Dorsolateral prefrontal cortex (tissue), 120 donors: ENCODE measurements at regions of chr4 and their contacts with region 1.

Region 1: GRCh38 chr4:38179690-38180377 is 219.6 kb downstream of the PTTG2 start:
- DNase-seq: peak; percentile 60 to 84 (median 78)
- H3K4me3 ChIP-seq: no peak overlapping the region
- H3K27ac ChIP-seq: peak overlapping the region in 18 of 59 donors; percentile 8 to 73 (median 42)
- H3K27me3 ChIP-seq: no peaks in the 10 kb centered on the region
- CTCF ChIP-seq: peak; percentile 89 to 100 (median 96)

Region 2: DNA sequence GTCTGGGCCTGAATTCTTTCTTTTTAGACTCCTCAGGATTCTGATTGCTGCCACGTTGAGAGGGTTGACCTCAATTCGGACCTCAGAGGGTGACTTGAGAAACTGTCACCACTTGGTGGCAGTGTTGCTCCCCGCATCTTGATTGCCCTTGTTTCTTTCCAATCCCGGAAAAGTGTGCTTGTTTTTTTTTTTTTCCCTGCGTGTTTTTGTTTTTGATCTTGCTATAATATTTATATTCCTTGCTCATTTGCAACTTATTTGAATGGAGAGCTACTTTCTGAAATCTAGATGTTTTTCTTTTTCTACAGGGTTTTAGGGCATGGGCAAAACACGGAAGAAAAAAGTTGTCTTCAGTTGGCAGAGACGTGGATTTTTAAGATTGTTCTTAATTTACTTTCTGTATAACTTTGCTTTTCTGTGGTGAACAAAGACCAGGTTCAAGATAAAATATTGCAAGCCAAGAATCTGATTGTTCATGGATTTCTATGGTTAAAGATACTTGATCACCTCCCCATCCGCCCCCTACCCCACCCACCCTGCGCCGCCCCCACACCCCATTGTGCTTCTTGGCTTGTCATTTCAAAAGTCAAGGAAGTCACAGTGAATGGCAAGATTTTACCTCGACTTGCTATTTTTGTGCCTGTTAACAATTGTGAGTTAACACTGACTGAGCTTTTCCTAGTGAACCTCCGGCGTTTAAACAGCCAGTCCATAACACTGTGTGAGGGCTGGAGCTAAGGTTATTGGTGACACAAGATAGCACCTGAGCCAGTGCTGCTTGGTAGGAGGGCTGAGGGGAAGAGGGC is 117.5 kb before region 1 on chr4:
- intact Hi-C with region 1: loop called in 1 of 2 experiments (anchors 5 kb)
- DNase-seq: peak; percentile 59 to 85 (median 74)
- H3K4me3 ChIP-seq: peak overlapping the region in 56 of 59 donors; percentile 11 to 65 (median 43)
- H3K27ac ChIP-seq: peak overlapping the region in 20 of 59 donors; percentile 1 to 67 (median 40)
- H3K27me3 ChIP-seq: no peaks in the 10 kb centered on the region
- CTCF ChIP-seq: peak; percentile 80 to 97 (median 91)

Region 3: DNA sequence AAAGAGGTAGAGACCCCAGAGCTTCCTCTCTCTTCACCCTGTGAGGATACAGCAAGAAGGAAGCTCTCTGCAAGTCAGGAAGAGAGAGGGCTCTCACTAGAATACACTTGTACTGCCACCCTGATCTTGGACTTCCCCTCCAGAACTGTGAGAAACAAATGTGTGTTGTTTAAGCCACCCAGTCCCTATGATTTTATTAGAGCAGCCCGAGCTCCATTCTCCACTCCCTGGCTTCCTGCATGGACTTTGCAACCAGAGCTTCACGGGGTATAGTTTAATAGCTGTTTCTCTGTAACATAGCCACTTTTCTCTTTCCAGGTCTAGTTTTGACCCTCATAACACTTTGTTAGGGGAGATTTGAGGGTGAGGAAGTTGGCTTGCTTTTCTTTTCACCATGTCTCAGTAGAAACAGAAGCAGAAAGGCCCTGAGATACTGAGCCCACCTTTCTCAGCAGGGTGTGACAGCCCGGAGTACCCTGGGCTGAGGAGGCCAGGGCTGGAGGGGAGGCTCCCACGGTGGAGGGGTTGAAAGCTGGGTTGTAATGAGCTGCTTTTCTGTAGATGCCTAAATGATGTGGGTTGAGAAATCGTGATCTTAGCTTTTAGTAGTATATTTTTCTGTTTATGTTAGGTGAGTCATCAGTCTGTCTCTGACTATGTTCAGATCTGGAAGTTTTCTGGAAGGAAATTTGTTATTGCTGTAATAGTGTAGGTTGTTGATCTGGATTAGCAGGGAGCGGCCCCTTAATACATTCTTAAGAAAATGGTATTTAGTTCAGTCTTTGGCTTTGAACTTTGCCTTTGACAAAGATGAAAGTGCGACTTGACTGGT is 101.0 kb before region 1 on chr4:
- intact Hi-C with region 1: loop called in 1 of 2 experiments (anchors 10 kb)
- DNase-seq: no peak
- H3K4me3 ChIP-seq: no peak overlapping the region
- H3K27ac ChIP-seq: peak overlapping the region in 47 of 59 donors; percentile 4 to 80 (median 49)
- H3K27me3 ChIP-seq: no peaks in the 10 kb centered on the region
- CTCF ChIP-seq: no peak

Region 4: GRCh38 chr4:38562751-38563198 is 382.9 kb after region 1 on chr4:
- intact Hi-C with region 1: loop called in 1 of 2 experiments (anchors 10 kb)
- DNase-seq: no peak
- H3K4me3 ChIP-seq: no peak overlapping the region
- H3K27ac ChIP-seq: peak overlapping the region in 14 of 59 donors; percentile 3 to 89 (median 24)
- H3K27me3 ChIP-seq: no peaks in the 10 kb centered on the region
- CTCF ChIP-seq: no peak

Region 5: DNA sequence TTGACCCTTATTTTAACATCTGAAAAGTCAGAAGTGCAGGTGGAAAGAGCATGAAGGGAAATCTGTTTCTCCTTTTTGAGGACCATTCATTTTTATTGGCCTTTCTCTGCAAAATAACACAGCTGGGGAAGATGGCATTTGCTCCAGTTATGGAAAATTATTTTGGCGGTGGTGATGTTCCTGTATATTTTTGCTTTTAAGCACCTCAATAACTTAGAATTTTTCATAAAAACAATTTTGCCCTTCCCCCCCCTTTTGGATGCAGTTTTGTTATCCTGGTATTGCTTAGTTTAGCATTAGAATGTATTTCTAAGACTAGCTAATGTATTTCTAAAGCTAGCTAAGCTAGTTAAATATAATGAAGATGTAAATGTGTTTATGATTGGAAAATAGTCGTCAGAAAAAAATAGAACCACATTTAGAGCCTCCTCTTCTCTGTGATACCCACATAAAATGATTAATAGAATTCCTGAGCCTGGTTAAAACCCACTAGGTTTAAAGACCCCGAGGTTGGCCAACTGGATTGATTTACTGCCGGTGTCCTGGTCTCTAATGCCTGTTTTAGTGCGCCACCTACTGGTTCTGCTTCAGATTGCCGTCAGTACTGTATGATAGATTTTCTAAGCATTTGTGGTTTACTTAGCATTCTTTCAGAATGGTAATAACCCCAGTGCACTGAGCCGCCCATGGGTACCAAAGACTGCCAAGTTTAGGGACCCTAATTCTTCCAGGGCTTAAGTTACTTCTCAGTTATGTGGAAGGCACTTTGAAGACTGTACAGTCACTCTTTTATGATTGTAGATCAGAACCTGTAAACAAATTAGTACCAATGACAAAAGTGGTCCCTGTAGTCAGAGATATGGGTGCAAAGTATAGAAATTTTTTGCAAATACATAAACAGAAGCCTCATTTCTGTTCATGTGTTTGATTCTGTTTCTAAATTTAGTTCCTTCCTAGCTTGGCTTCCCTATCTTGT is 495.6 kb after region 1 on chr4:
- intact Hi-C with region 1: loop called (anchors 2 to 5 kb)
- DNase-seq: peak; percentile 46 to 94 (median 78)
- H3K4me3 ChIP-seq: peak overlapping the region in 9 of 59 donors; percentile 9 to 42 (median 21)
- H3K27ac ChIP-seq: peak overlapping the region in 57 of 59 donors; percentile 22 to 100 (median 97)
- H3K27me3 ChIP-seq: no peaks in the 10 kb centered on the region
- CTCF ChIP-seq: peak; percentile 83 to 99 (median 94)

Region 6: GRCh38 chr4:38730830-38731646 is 551.2 kb after region 1 on chr4:
- intact Hi-C with region 1: loop called (anchors 1 to 2 kb)
- DNase-seq: peak; percentile 30 to 91 (median 78)
- H3K4me3 ChIP-seq: no peak overlapping the region
- H3K27ac ChIP-seq: no peak overlapping the region
- H3K27me3 ChIP-seq: no peaks in the 10 kb centered on the region
- CTCF ChIP-seq: peak; percentile 78 to 99 (median 94)

Region 7: GRCh38 chr4:38782452-38783108 is 602.7 kb after region 1 on chr4 and contains the start of gene TLR10:
- intact Hi-C with region 1: loop called in 1 of 2 experiments (anchors 5 kb)
- DNase-seq: peak in 2 of 10 donors; percentile 30 to 42
- H3K4me3 ChIP-seq: peak within 1 kb of the TSS in 38 of 59 donors; percentile 4 to 55 (median 28)
- H3K27ac ChIP-seq: peak within 1 kb of the TSS in 1 of 59 donors; percentile 15
- H3K27me3 ChIP-seq: no peaks in the 10 kb centered on the region
- CTCF ChIP-seq: peak; percentile 64 to 89 (median 82)
- total RNA-seq, gene TLR10: 0.27 to 6.7 (median 1.5) TPM